Cardiac septum (tissue), 1 donor: ENCODE measurements at regions of chr19 and their contacts with region 1.

Region 1: GRCh38 chr19:44093931-44094765 is at the start of gene ZNF224:
- DNase-seq: peak; percentile 97
- total RNA-seq, gene ZNF224: 12.9 TPM

Region 2: GRCh38 chr19:44002566-44003460 is 91.3 kb before region 1 on chr19 and contains the start of gene ZNF230:
- intact Hi-C with region 1: loop called (anchors 5 kb)
- DNase-seq: peak; percentile 95
- total RNA-seq, gene ZNF230: 2.3 TPM

Region 3: DNA sequence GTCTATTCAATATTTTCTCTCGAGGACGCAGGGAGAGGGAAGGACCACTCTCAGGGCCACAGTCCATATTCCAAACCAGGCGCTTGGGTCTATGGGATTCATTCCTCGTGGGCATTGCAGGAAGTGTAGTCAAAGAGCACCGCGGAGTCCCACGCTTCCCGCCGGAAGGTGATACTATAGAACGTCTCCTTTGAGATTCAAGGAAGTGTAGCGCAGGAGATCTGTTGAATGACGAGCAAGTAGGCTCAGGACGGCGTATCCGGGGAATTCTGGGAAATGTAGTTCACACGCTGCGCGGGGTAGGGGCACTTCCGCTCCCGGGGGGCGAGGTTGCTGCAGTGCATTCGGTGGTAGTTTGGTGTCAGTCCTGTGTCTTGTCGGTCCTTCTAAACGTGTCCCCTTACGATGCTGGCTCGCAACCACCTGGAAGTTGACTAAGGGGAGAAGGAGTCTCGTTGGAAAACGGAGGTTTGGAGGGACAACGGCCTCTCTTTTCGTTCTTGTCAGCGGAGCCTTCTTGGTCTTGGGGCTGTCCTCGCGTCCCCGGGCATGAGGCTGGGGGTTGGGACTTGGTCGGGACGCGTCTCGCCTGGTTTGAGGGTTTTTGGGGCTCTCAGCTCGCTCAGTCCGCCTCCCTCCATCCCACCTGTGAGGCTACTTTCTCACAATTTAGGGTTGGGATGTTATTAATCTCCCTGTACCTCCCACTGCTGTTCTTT is 22.2 kb before region 1 on chr19 and contains the start of gene ZNF284:
- intact Hi-C with region 1: loop called (anchors 2 kb)
- DNase-seq: peak; percentile 94
- total RNA-seq, gene ZNF284: 1.4 TPM